IMR-90 (cell line): ENCODE measurements at regions of chr14 and their contacts with region 1.

Region 1: DNA sequence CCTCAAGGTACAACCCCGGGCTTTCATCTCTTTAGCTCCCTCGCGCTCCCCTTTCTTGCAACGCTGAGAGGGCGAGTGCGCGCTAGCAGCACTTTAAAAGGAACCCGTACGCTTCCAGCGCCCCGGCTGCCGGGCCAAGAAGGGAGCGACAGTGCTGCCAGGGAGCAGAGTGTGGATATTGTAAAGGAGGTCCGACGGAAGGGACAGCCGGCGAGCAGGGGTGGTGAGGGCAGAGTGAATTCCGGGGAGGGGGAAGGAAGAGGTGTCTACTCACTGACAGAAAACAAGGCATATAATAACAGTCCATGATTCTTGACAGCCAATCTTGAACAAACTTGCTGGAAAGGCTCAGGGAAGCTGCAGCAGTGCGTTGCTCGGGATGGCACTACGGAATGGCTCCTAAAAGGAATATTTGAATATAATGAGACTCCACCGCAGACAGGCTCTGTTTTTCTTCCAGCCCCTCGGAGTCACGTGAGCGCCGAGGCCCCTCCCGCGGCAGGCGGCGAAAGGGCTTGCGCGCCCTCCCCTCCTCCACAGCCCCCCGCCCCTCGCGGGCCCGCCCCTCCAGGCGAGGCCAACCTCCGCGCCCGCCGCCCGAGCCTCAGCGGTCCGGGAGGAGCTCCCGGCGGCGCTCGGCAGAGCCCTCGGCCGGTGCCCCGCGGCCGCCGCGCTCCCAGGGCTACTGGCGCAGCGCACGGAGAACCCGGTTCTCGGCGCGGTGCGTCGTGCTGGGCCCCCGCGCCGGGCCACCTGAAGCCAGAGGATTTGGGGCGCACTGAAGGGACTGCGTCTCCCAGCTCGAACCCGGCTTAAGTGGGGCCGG is 3.4 kb downstream of the BMP4 start:
- DNase-seq: peak; percentile 74
- ATAC-seq: peak; percentile 81
- H3K4me3 ChIP-seq: peak overlapping the region; percentile 58
- H3K27ac ChIP-seq: peak overlapping the region; percentile 96
- H3K4me1 ChIP-seq: peaks cover 4% of the 10 kb centered on the region; the same call in 1 of the 2 replicates
- H3K27me3 ChIP-seq: peaks cover 15% of the 10 kb centered on the region
- CTCF ChIP-seq: no peak
- POLR2A ChIP-seq: no peak
- RAD21 ChIP-seq: no peak

Region 2: GRCh38 chr14:53432378-53432802 is 520.8 kb before region 1 on chr14:
- CTCF ChIA-PET with region 1: interaction called, 8 read pairs
- POLR2A ChIA-PET with region 1: no interaction called
- dilution Hi-C with region 1: no loop called
- in situ Hi-C with region 1: no loop called
- intact Hi-C with region 1: loop called (anchors 2 kb)
- DNase-seq: peak; percentile 60
- ATAC-seq: peak; percentile 94
- H3K4me3 ChIP-seq: no peak overlapping the region
- H3K27ac ChIP-seq: peak overlapping the region; percentile 3; the same call in 1 of the 2 replicates
- H3K4me1 ChIP-seq: peaks cover 6% of the 10 kb centered on the region
- H3K27me3 ChIP-seq: no peaks in the 10 kb centered on the region
- CTCF ChIP-seq: peak; percentile 71
- POLR2A ChIP-seq: no peak
- RAD21 ChIP-seq: peak; percentile 83

Region 3: DNA sequence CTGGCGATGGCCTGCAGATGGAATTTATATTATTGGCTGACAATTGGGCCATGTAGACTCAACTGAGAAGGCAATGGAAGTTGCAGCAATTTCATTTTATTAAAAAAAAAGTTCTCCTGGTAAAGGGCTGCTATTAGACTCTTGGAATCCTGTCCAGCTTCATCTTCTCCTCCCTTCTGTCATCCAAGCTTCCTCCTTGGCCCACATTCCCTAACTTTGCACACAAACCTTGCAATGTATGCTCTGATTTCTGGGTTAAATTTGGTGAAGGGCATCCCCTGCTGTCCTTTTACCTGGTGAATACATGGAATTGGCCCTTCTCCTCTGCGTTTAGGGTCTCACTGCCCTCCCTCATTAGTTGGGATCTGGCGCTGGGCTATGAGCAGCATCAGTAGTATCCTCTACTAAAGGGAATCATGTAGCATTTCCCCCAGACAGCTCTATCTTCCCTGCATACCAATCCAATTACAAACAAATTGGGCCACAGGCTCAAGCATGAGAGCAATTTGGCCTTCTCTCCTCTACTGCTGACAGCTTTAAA is 333.5 kb before region 1 on chr14:
- CTCF ChIA-PET with region 1: no interaction called
- POLR2A ChIA-PET with region 1: interaction called, 4 read pairs
- dilution Hi-C with region 1: no loop called
- in situ Hi-C with region 1: no loop called
- intact Hi-C with region 1: loop called (anchors 5 kb)
- DNase-seq: peak; percentile 64
- ATAC-seq: peak; percentile 96
- H3K4me3 ChIP-seq: no peak overlapping the region
- H3K27ac ChIP-seq: peak overlapping the region; percentile 82; the same call in 1 of the 2 replicates
- H3K4me1 ChIP-seq: peaks cover 20% of the 10 kb centered on the region
- H3K27me3 ChIP-seq: peaks cover 2% of the 10 kb centered on the region; the same call in 1 of the 2 replicates
- CTCF ChIP-seq: no peak
- POLR2A ChIP-seq: no peak
- RAD21 ChIP-seq: no peak

Region 4: GRCh38 chr14:53894456-53894855 is 58.8 kb before region 1 on chr14:
- CTCF ChIA-PET with region 1: no interaction called
- POLR2A ChIA-PET with region 1: interaction called, 3 read pairs
- dilution Hi-C with region 1: no loop called
- in situ Hi-C with region 1: no loop called
- intact Hi-C with region 1: loop called (anchors 5 kb)
- DNase-seq: peak; percentile 79
- ATAC-seq: peak; percentile 85
- H3K4me3 ChIP-seq: no peak overlapping the region
- H3K27ac ChIP-seq: peak overlapping the region; percentile 81
- H3K4me1 ChIP-seq: peaks cover 23% of the 10 kb centered on the region
- H3K27me3 ChIP-seq: no peaks in the 10 kb centered on the region
- CTCF ChIP-seq: no peak
- POLR2A ChIP-seq: no peak
- RAD21 ChIP-seq: no peak

Region 5: GRCh38 chr14:54010981-54011380 is 57.8 kb after region 1 on chr14:
- CTCF ChIA-PET with region 1: no interaction called
- POLR2A ChIA-PET with region 1: no interaction called
- dilution Hi-C with region 1: no loop called
- in situ Hi-C with region 1: no loop called
- intact Hi-C with region 1: no loop called
- DNase-seq: peak; percentile 7
- ATAC-seq: peak; percentile 48
- H3K4me3 ChIP-seq: no peak overlapping the region
- H3K27ac ChIP-seq: no peak overlapping the region
- H3K4me1 ChIP-seq: no peaks in the 10 kb centered on the region
- H3K27me3 ChIP-seq: no peaks in the 10 kb centered on the region; the same call in 1 of the 2 replicates
- CTCF ChIP-seq: no peak
- POLR2A ChIP-seq: no peak
- RAD21 ChIP-seq: no peak

Region 6: GRCh38 chr14:54152351-54152750 is 199.1 kb after region 1 on chr14:
- CTCF ChIA-PET with region 1: no interaction called
- POLR2A ChIA-PET with region 1: no interaction called
- dilution Hi-C with region 1: no loop called
- in situ Hi-C with region 1: no loop called
- intact Hi-C with region 1: no loop called
- DNase-seq: no peak
- ATAC-seq: no peak
- H3K4me3 ChIP-seq: no peak overlapping the region
- H3K27ac ChIP-seq: no peak overlapping the region
- H3K4me1 ChIP-seq: no peaks in the 10 kb centered on the region
- H3K27me3 ChIP-seq: no peaks in the 10 kb centered on the region; the same call in 1 of the 2 replicates
- CTCF ChIP-seq: no peak
- POLR2A ChIP-seq: no peak
- RAD21 ChIP-seq: no peak

Region 7: GRCh38 chr14:54253195-54253947 is 300.2 kb after region 1 on chr14:
- CTCF ChIA-PET with region 1: no interaction called
- POLR2A ChIA-PET with region 1: no interaction called
- dilution Hi-C with region 1: no loop called
- in situ Hi-C with region 1: no loop called
- intact Hi-C with region 1: loop called (anchors 1 kb)
- DNase-seq: peak; percentile 89
- ATAC-seq: peak; percentile 87
- H3K4me3 ChIP-seq: no peak overlapping the region
- H3K27ac ChIP-seq: no peak overlapping the region
- H3K4me1 ChIP-seq: peaks cover 7% of the 10 kb centered on the region; the same call in 1 of the 2 replicates
- H3K27me3 ChIP-seq: peaks cover 14% of the 10 kb centered on the region
- CTCF ChIP-seq: no peak
- POLR2A ChIP-seq: no peak
- RAD21 ChIP-seq: 0 out of 2 replicates have a peak, but pooled peaks have one; percentile 9